Activated CD8-positive, alpha-beta memory T cell treated with anti-CD3 and anti-CD28 coated beads, Interleukin-2, amount 10 ng/mL, durations not matched to agents 7 days and 5 days (primary cell): ENCODE measurements at regions of chr11 and their contacts with region 1.

Region 1: GRCh38 chr11:6443269-6444003 is 2.6 kb upstream of the HPX start:
- DNase-seq: peak; percentile 69
- ATAC-seq: peak; percentile 85
- H3K4me3 Mint-ChIP-seq: no peak overlapping the region
- H3K27ac Mint-ChIP-seq: no peak overlapping the region
- H3K4me1 Mint-ChIP-seq: no peaks in the 10 kb centered on the region
- H3K27me3 Mint-ChIP-seq: no peaks in the 10 kb centered on the region

Region 2: DNA sequence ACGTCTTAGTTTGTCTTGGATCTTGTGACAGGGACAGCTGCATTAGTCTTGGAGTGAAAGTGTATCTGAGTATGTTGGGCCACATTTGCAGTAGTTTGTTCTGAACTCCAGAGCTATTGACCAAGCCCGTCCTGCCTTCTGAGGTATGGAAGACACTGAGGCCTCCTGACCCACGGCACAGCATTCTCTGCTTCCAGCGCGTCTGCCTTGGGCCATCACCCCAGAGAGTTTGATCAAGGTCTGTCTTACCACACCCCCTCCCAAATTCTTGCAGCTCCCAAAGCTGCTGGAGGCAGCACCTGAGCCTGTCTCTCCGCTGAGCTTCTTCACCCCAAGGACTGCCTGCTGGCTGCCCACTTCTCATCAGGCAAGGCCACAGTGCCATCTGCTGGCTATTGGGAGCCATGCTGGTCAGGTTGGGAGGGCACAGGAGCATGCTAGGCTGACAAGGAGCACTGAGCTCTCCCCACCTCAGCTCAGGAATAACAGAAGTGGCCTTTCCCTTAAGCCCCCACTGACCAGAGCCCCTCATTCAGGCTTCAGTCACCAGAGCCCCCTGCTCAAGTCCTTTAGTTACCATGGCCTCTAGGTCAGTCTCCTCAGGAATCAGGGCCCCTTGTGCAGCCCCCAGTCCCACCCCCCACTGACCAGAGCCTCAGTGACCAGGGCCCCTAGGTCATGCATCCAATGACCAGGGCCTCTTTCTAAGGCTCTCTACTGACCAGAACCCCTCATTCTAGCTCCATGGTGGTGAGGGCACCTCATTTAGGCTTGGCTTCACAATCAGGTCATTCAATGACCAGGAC is 80.4 kb before region 1 on chr11:
- CTCF ChIA-PET with region 1: interaction called, 23 read pairs
- DNase-seq: peak; percentile 83
- ATAC-seq: peak; percentile 91
- H3K4me3 Mint-ChIP-seq: no peak overlapping the region
- H3K27ac Mint-ChIP-seq: no peak overlapping the region
- H3K4me1 Mint-ChIP-seq: no peaks in the 10 kb centered on the region
- H3K27me3 Mint-ChIP-seq: no peaks in the 10 kb centered on the region

Region 3: DNA sequence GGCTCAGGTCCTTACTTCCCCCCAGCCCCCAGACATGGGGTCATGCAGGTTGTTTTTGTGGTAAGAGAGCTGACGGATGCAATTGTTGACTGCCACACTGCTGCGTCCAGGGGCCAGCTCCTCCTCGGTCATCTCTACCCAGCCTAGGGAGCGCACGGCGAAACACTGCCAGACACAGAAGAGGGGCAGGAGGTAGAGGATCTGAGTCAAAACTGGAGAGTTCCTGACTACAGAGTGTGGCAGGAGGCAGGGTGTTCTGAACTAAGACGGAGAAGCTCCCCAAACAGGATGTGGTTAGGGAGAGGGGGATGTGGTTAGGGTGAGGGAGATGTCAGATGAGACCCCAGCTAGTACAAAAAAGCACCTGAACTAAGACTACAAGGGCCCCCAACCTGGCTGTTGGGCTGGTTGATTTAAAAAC is 40.9 kb before region 1 on chr11:
- CTCF ChIA-PET with region 1: interaction called, 30 read pairs
- DNase-seq: peak; percentile 96
- ATAC-seq: peak; percentile 90
- H3K4me3 Mint-ChIP-seq: peak overlapping the region; percentile 73
- H3K27ac Mint-ChIP-seq: peak overlapping the region; percentile 96
- H3K4me1 Mint-ChIP-seq: peaks cover 62% of the 10 kb centered on the region
- H3K27me3 Mint-ChIP-seq: no peaks in the 10 kb centered on the region

Region 4: DNA sequence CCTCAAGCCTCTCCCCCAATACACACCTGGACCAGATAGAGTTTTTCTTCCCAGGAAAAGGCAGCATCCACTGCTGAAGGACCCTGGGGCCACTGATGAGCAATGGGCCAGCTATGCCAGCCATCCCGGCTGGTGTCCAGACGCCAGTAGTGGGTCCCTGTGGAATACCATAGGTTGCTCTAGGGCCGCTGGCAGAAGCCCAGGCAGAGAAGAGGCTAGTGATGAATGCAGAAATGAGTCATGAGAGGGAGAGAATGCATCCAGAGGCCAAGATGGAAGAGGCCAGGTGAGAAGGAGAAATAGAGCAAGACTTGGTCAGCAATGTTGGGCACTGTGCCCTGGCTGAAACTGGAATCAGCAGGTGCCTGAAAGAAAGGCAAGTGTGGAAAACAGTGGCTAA is 11.6 kb before region 1 on chr11:
- CTCF ChIA-PET with region 1: interaction called, 71 read pairs
- DNase-seq: no peak
- ATAC-seq: no peak
- H3K4me3 Mint-ChIP-seq: no peak overlapping the region
- H3K27ac Mint-ChIP-seq: no peak overlapping the region
- H3K4me1 Mint-ChIP-seq: peaks cover 4% of the 10 kb centered on the region
- H3K27me3 Mint-ChIP-seq: no peaks in the 10 kb centered on the region

Region 5: GRCh38 chr11:6481012-6481923 is 37.8 kb after region 1 on chr11 and contains the starts of genes ARFIP2 and TIMM10B:
- CTCF ChIA-PET with region 1: interaction called, 12 read pairs
- DNase-seq: peak; percentile 99
- ATAC-seq: peak; percentile 98
- H3K4me3 Mint-ChIP-seq: peak within 1 kb of the TSS; percentile 86
- H3K27ac Mint-ChIP-seq: peak within 1 kb of the TSS; percentile 95
- H3K4me1 Mint-ChIP-seq: peaks cover 32% of the 10 kb centered on the region
- H3K27me3 Mint-ChIP-seq: no peaks in the 10 kb centered on the region
- total RNA-seq, gene ARFIP2: 33.5 to 39.3 TPM
- total RNA-seq, gene TIMM10B: 29.2 to 47.0 TPM